HepG2 (cell line): ENCODE measurements at regions of chr17 and their contacts with region 1.

Region 1: DNA sequence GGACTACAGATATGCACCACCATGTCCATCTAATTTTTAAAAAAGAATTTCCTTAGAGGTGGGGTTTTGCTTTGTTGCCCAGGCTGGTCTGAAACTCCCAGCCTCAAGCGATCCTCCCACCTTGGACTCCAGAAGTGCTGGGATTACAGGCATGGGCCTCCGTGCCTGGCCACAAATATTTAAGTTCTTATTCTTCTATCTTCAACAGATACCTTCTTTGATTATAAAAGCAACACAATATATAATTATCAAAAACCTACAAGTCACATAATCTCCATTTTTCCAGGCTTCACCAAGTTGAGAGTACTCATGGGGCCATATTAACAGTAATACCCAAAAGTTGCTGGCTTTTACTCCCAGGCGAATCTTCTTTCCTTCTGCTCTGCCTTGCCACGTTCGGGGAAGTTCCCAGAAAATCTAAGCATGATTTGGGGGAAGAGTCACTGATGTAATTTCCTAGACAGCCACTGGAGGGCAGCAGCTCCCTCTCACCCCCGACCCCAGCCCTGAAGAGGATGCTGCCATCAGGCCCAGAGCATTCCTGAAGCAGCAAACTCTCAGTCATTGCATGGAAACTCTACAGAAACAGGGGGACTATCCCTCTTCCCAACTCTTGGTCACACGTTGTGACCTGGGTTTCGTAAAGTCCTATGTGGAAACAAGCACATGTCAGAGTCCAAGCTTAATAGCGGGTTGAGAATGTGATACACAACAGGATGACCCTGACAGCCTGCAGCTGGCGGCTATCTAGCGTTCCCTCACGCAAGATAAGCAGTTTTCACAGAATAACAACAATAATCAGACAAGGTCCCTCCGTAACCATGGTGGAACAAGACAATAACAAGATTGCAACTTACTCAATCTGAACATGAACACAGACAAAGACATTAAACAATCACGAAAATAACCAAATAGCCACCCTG is 43.9 kb upstream of the DHX40 start:
- DNase-seq: peak; percentile 74
- ATAC-seq: peak; percentile 97
- H3K4me3 ChIP-seq: peak overlapping the region in 2 of 3 experiments; percentile 16 to 35; a peak in 4 of 6 replicates
- H3K27ac ChIP-seq: peak overlapping the region; percentile 34
- H3K4me1 ChIP-seq: peaks cover 52% of the 10 kb centered on the region
- H3K27me3 ChIP-seq: no peaks in the 10 kb centered on the region
- CTCF ChIP-seq: peak; percentile 97
- EP300 ChIP-seq: peak in 1 of 2 experiments; percentile 61; a peak in 2 of 4 replicates
- POLR2A ChIP-seq: no peak
- RAD21 ChIP-seq: peak; percentile 88

Region 2: GRCh38 chr17:59464246-59464645 is 57.2 kb before region 1 on chr17:
- CTCF ChIA-PET with region 1: no interaction called
- POLR2A ChIA-PET with region 1: no interaction called
- in situ Hi-C with region 1: no loop called
- intact Hi-C with region 1: loop called (anchors 1 kb)
- DNase-seq: no peak
- ATAC-seq: no peak
- H3K4me3 ChIP-seq: no peak overlapping the region
- H3K27ac ChIP-seq: peak overlapping the region; percentile 70
- H3K4me1 ChIP-seq: peaks cover 78% of the 10 kb centered on the region
- H3K27me3 ChIP-seq: no peaks in the 10 kb centered on the region
- CTCF ChIP-seq: no peak
- EP300 ChIP-seq: no peak
- POLR2A ChIP-seq: no peak
- RAD21 ChIP-seq: no peak

Region 3: DNA sequence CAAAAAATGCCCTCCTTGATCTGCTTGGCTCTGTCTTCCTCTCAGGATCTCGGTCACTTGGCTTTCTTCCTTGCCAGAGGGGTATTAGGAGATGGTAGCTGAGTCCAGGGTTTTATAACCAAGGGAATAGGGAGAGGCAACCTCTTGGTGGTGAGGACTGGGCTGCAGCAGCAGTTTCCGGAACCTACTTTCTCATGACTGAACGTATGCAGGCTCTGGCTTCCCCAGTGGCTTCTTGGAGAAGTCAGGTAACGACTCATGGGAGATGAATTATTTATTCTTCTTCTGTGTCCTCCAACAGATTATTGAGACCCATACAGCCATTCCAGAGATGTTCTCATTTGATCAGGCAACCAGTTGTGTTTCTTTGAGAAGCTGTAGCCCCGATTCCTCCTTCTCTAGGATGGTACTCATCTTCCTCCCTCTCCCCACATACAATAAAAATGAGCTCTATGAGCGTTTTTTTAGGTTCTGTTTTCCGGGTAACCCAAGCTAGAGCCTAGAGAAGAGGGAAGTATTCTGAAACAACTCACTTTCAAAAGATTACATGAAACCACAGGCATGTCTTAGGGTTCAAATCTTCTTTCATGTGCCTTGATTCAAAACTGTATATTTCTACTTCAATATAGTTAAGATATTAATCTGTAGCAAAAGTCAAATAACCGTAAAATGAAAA is 21.6 kb after region 1 on chr17:
- CTCF ChIA-PET with region 1: no interaction called
- POLR2A ChIA-PET with region 1: no interaction called
- in situ Hi-C with region 1: no loop called
- intact Hi-C with region 1: no loop called
- DNase-seq: no peak
- ATAC-seq: no peak; the same call in 2 of the 3 replicates
- H3K4me3 ChIP-seq: no peak overlapping the region
- H3K27ac ChIP-seq: no peak overlapping the region
- H3K4me1 ChIP-seq: no peaks in the 10 kb centered on the region
- H3K27me3 ChIP-seq: peaks cover 0 to 10% of the 10 kb centered on the region in 2 experiments; a peak in 1 of 5 replicates
- CTCF ChIP-seq: no peak
- EP300 ChIP-seq: no peak
- POLR2A ChIP-seq: no peak
- RAD21 ChIP-seq: no peak

Region 4: DNA sequence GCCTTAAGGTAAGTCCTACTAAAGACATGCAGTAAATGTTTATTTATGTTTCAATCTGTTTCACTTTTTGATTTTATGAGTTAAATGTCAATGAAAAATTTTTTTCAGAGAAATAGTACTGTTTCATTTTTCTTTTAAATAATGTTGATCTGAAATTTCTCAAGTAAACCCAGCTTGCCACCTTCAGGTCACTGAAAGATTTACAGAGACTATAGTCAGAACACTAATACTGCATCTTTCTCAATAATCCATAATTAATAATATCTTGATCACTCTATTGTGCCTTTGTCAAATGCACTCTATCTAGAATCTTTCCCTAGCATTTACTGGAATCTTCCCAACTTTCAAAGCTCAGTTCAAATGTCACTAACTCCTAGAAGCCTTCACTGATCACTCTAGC is 37.5 kb after region 1 on chr17:
- CTCF ChIA-PET with region 1: interaction called, 3 read pairs
- POLR2A ChIA-PET with region 1: no interaction called
- in situ Hi-C with region 1: no loop called
- intact Hi-C with region 1: loop called (anchors 2 kb)
- DNase-seq: peak; percentile 17
- ATAC-seq: no peak
- H3K4me3 ChIP-seq: no peak overlapping the region
- H3K27ac ChIP-seq: no peak overlapping the region
- H3K4me1 ChIP-seq: peaks cover 18% of the 10 kb centered on the region
- H3K27me3 ChIP-seq: peaks cover 0 to 10% of the 10 kb centered on the region in 2 experiments; a peak in 1 of 5 replicates
- CTCF ChIP-seq: peak; percentile 35; the same call in 1 of the 2 replicates
- EP300 ChIP-seq: no peak
- POLR2A ChIP-seq: no peak
- RAD21 ChIP-seq: no peak